Calu3 (cell line): ENCODE measurements at regions of chr3 and their contacts with region 1.

Region 1: DNA sequence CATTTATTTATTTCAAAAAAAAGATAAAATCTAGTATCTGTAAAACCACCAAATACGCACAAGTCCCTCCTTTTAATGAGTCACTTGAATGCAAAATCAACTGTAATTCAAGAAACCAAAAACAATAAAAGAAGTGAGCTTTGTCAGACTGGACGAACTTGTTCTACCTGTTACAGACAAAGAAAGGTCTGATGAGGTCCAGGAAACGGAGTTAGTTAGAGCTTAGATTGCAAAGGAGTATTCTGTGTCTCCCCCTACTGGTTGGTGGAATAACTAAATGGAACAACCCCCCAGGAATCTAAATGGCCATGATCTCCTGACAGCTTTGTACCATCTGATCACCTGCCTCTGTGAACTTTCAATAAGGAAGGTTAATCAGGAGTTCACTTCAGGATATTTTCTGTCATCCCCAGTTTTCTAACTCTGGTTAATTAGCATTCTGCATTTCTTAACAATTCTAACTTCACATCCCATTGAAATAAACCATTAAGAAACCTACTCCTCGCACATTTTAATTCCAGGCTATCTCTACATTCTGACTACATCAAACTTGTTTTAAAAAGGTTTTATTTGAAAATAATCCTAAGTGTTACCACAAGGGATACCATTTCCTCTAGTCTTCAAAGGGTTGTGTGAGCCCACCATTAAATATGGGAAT is 333.0 kb upstream of the SATB1 start:
- DNase-seq: peak; percentile 66
- H3K4me3 Mint-ChIP-seq: no peak overlapping the region
- H3K27ac Mint-ChIP-seq: peak overlapping the region; percentile 73
- H3K4me1 Mint-ChIP-seq: peaks cover 9% of the 10 kb centered on the region
- H3K27me3 Mint-ChIP-seq: no peaks in the 10 kb centered on the region
- CTCF ChIP-seq: peak; percentile 27

Region 2: DNA sequence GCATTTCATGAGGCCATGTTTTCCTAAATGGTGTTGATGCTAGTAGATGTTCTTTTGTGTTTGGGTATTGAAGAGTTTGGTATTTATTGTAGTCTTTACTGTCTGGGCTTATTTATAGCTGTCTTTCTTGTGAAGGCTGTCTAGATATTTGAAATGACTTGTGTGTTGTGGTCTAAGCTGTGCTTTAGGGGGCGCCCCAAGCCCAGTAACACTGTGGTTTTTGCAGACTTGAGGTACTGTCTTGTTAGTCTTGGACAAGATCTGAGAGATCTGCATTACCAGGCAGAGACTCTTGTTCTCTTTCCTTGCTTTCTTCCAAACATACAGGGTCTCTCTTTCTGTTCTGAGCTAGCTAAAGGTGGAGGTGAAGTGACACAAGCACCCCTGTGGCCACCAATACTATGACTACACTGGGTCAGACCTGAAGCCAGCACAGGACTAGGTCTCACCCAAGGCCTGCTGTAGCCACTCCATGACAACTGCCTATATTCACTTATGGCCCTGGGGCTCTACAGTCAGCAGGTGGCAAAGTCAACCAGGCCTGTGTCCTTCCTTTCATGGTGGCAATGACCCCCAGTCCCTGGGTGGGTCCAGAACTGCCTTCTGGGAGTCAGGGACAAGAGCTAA is 863.6 kb before region 1 on chr3:
- CTCF ChIA-PET with region 1: interaction called, 3 read pairs
- intact Hi-C with region 1: loop called (anchors 1 kb)
- DNase-seq: peak; percentile 70
- H3K4me3 Mint-ChIP-seq: no peak overlapping the region
- H3K27ac Mint-ChIP-seq: no peak overlapping the region
- H3K4me1 Mint-ChIP-seq: peaks cover 12% of the 10 kb centered on the region
- H3K27me3 Mint-ChIP-seq: no peaks in the 10 kb centered on the region
- CTCF ChIP-seq: peak; percentile 56

Region 3: GRCh38 chr3:18389108-18389733 is 369.0 kb before region 1 on chr3:
- CTCF ChIA-PET with region 1: no interaction called
- intact Hi-C with region 1: loop called (anchors 2 kb)
- DNase-seq: peak; percentile 38
- H3K4me3 Mint-ChIP-seq: no peak overlapping the region
- H3K27ac Mint-ChIP-seq: no peak overlapping the region
- H3K4me1 Mint-ChIP-seq: no peaks in the 10 kb centered on the region
- H3K27me3 Mint-ChIP-seq: no peaks in the 10 kb centered on the region
- CTCF ChIP-seq: peak; percentile 31

Region 4: DNA sequence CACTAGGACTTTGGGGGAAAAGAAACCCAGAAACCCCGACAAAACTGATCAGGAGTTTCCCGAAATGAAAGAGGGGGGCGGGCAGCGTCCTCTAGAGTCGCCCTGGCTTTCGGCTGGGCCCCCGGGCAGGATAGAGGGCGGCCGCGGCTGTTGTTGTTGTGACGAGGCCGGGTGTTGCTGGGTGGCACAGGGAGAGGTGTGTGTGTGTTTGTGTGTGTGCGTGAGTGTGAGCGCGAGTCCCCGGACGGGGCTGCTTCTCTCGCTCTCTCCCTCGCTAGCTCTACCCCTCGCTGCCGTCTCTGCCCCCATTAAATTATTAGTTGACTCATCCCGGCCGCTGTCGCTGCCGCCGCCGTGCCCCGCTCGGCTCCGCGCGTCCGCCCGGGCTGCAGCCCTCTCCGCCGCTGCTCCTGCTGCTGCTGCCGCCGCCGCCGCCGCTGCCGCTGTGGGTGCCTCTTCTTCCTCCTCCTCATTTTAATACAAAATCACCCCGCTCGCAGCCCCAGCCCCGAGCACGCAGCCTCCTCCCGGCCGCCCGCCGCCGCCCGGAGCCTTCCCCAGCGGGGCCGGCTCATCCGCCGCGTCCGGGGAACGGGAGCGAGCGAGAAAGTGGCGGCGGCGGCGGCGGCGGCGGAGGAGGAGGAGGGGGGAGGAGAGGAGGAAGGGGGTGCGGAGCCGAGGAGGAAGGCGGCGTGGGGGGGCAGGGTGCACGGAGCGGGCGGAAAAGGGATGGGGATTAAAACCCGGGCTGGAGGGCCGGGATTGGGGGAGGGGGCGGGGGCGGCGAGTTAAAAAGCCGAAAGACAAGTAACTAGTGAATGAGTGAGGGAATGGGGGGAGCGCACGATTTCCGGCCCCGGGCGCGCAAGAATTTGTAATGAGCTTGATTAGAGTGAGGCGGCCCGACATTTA is 333.2 kb before region 1 on chr3 and contains the start of gene SATB1:
- CTCF ChIA-PET with region 1: no interaction called
- intact Hi-C with region 1: loop called (anchors 10 kb)
- DNase-seq: peak; percentile 78
- H3K4me3 Mint-ChIP-seq: peak within 1 kb of the TSS; percentile 95
- H3K27ac Mint-ChIP-seq: peak within 1 kb of the TSS; percentile 90
- H3K4me1 Mint-ChIP-seq: peaks cover 6% of the 10 kb centered on the region
- H3K27me3 Mint-ChIP-seq: no peaks in the 10 kb centered on the region
- CTCF ChIP-seq: no peak
- total RNA-seq, gene SATB1: 16.6 and 16.8 TPM in 2 replicates

Region 5: DNA sequence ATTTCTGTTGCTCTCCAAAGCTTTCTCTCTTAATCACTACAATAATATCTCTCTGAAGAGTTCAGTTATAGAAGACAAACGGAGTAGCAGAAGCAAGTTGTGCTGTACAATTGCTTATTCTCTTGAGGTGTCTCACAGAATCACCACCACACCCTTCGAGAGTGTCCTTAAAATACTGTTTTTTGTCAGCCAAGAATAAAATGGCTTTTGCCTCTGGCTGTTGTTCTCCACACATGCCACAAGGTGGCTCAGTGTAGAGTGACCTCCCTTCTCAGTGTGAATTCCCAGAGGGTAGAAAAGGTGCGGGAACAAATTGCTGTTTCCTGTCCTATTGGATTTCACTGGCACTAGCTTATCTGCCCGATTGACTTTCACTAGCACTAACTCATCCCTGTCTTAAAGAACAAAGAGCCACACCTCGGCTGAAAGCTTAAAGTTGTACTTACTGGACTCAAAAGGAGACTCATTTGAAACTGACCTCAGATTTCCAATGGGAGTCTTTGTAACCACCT is 198.8 kb before region 1 on chr3:
- CTCF ChIA-PET with region 1: interaction called, 17 read pairs
- intact Hi-C with region 1: loop called (anchors 1 kb)
- DNase-seq: peak; percentile 46
- H3K4me3 Mint-ChIP-seq: peak overlapping the region; percentile 10
- H3K27ac Mint-ChIP-seq: peak overlapping the region; percentile 68
- H3K4me1 Mint-ChIP-seq: peaks cover 11% of the 10 kb centered on the region
- H3K27me3 Mint-ChIP-seq: no peaks in the 10 kb centered on the region
- CTCF ChIP-seq: peak; percentile 67

Region 6: GRCh38 chr3:18657858-18658820 is 100.0 kb before region 1 on chr3:
- CTCF ChIA-PET with region 1: interaction called, 3 read pairs
- intact Hi-C with region 1: loop called (anchors 5 kb)
- DNase-seq: peak; percentile 37
- H3K4me3 Mint-ChIP-seq: no peak overlapping the region
- H3K27ac Mint-ChIP-seq: no peak overlapping the region
- H3K4me1 Mint-ChIP-seq: no peaks in the 10 kb centered on the region
- H3K27me3 Mint-ChIP-seq: no peaks in the 10 kb centered on the region
- CTCF ChIP-seq: no peak

Region 7: GRCh38 chr3:18787441-18787840 is 29.3 kb after region 1 on chr3:
- CTCF ChIA-PET with region 1: no interaction called
- intact Hi-C with region 1: no loop called
- DNase-seq: no peak
- H3K4me3 Mint-ChIP-seq: no peak overlapping the region
- H3K27ac Mint-ChIP-seq: no peak overlapping the region
- H3K4me1 Mint-ChIP-seq: peaks cover 15% of the 10 kb centered on the region
- H3K27me3 Mint-ChIP-seq: no peaks in the 10 kb centered on the region
- CTCF ChIP-seq: no peak

Region 8: GRCh38 chr3:18988614-18989229 is 230.5 kb after region 1 on chr3:
- CTCF ChIA-PET with region 1: interaction called, 8 read pairs
- intact Hi-C with region 1: loop called (anchors 2 kb)
- DNase-seq: peak; percentile 12
- H3K4me3 Mint-ChIP-seq: no peak overlapping the region
- H3K27ac Mint-ChIP-seq: no peak overlapping the region
- H3K4me1 Mint-ChIP-seq: peaks cover 12% of the 10 kb centered on the region
- H3K27me3 Mint-ChIP-seq: no peaks in the 10 kb centered on the region
- CTCF ChIP-seq: peak; percentile 41